ENCODE measurements at regions of chr2 and their contacts with region 1.

Region 1: GRCh38 chr2:203014456-203015199 is at the start of gene NBEAL1:
- DNase-seq: peak; percentile 95 to 99
- H3K4me3 ChIP-seq: peak within 1 kb of the TSS; percentile 72 to 83
- H3K27ac ChIP-seq: peak within 1 kb of the TSS; percentile 90 to 97
- H3K4me1 ChIP-seq: peaks cover 0 to under 1% of the 10 kb centered on the region in 2 donors
- H3K27me3 ChIP-seq: no peaks in the 10 kb centered on the region
- CTCF ChIP-seq: no peak
- total RNA-seq, gene NBEAL1: 33.0 TPM

Region 2: GRCh38 chr2:202911512-202912341 is 102.9 kb before region 1 on chr2 and contains the starts of genes CARF and WDR12:
- intact Hi-C with region 1: loop called (anchors 5 kb)
- DNase-seq: peak; percentile 61 to 95
- H3K4me3 ChIP-seq: peak within 1 kb of the TSS; percentile 64 to 69
- H3K27ac ChIP-seq: peak within 1 kb of the TSS; percentile 82
- H3K4me1 ChIP-seq: peaks cover 0 to 11% of the 10 kb centered on the region in 2 donors
- H3K27me3 ChIP-seq: no peaks in the 10 kb centered on the region
- CTCF ChIP-seq: no peak
- total RNA-seq, gene CARF: 26.2 TPM
- total RNA-seq, gene WDR12: 2.1 TPM

Region 3: DNA sequence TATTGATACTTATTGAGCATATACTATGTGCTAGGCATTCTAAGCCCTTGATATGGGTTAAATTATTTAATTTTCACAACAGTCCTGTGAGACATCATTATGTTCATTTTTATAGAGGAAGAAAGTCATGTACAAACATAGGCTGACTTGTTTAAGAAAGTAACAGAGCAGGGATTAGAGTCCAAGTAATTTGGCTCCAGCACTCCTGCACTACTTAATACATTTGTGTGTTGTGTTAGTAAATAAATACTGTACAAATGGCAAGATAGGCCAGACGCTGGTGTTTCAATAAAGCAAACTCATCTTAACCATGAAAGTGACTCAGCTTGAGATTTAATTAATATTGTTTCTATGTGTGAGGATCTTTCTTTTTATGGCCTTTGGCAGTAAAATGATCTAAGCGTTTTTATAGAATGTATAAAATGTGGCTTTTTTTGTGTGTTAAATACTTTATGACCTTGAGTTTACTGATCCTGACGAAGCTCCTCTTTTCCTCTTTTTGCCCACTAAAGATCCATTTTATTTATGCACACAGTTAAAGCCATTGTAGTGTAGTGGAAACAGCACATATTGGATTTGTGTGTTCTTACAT is 21.3 kb after region 1 on chr2:
- intact Hi-C with region 1: loop called (anchors 2 kb)
- DNase-seq: no peak
- H3K4me3 ChIP-seq: peak overlapping the region in 1 of 2 donors; percentile 12
- H3K27ac ChIP-seq: peak overlapping the region; percentile 87 to 88
- H3K4me1 ChIP-seq: peaks cover 8 to 67% of the 10 kb centered on the region in 2 donors
- H3K27me3 ChIP-seq: no peaks in the 10 kb centered on the region
- CTCF ChIP-seq: no peak